ENCODE measurements at regions of chr2 and their contacts with region 1.

Region 1: GRCh38 chr2:10832203-10832936 is 19.8 kb upstream of the PDIA6 start:
- DNase-seq: peak; percentile 88
- H3K4me3 ChIP-seq: no peak overlapping the region
- H3K27ac ChIP-seq: no peak overlapping the region
- H3K4me1 ChIP-seq: peaks cover 0 to 31% (median 19%) of the 10 kb centered on the region in 4 donors
- H3K27me3 ChIP-seq: peaks cover 2 to 25% (median 6%) of the 10 kb centered on the region in 3 donors
- CTCF ChIP-seq: peak; percentile 74 to 94 (median 91)
- EP300 ChIP-seq: no peak
- POLR2A ChIP-seq: no peak

Region 2: DNA sequence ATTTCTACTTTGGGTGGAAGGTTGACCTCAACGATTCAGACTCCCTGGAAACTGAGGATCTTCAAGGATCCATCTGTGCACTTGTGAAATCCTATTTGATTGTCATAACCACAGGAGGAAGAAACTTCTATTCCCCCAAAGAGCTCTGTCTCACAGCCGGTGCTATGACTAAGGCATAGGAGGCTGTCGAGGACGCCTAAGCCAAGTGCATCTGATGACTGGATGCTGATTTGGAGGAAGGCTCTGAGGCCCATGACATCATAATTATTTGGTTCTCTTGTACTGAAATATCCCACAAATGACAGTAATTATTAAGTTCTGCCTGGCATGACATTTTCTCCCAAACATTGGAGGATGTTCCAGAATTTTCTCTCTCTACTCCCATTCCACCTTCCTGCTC is 65.6 kb after region 1 on chr2:
- intact Hi-C with region 1: loop called (anchors 5 kb)
- DNase-seq: no peak
- H3K4me3 ChIP-seq: no peak overlapping the region
- H3K27ac ChIP-seq: no peak overlapping the region
- H3K4me1 ChIP-seq: no peaks in the 10 kb centered on the region
- H3K27me3 ChIP-seq: no peaks in the 10 kb centered on the region
- CTCF ChIP-seq: no peak
- EP300 ChIP-seq: no peak
- POLR2A ChIP-seq: no peak

Region 3: DNA sequence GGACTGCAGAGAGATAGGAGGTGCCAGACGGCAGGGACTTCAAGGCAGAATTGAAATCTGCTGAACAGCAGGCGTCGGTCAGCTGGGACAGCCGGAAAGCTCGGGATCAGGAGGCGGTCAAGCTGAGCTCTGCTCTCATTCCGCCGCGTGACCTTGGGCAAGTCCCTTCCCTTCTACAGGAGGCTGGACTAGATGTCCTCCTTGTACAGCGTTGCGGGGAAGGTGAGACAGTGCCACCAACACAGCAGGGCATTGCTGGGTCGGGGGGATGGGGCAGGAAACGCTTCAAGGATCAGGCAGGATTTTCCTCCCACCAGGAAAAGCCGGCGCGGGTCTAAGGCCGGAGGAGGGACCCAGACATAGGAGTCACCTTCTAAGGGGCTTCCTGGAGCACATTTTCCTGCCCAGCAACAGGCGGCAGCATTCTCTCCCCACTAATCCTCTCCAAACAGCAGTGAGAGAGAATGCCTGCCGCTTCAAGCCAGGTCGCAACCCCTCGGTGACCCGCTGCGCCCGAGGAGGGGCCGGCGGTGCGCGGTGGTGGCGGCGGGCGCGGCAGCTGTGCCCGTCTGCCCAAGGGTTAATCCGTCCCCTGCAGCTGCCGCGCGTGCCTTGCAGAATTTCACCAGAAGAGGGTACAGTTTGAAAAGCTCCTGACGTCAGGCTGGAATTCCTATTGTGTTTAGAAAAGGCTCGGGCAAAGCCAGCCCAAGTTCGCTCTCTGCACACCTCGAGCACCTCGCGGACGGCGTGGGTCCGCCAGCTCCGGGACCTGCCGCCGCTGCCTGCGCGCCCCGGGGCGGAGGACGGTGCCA is 79.1 kb after region 1 on chr2 and contains the start of gene KCNF1:
- intact Hi-C with region 1: loop called (anchors 5 kb)
- DNase-seq: peak; percentile 59
- H3K4me3 ChIP-seq: peak within 1 kb of the TSS; percentile 21 to 48 (median 42)
- H3K27ac ChIP-seq: peak within 1 kb of the TSS in 1 of 4 donors; percentile 57
- H3K4me1 ChIP-seq: peaks cover 0 to 15% (median 6%) of the 10 kb centered on the region in 4 donors
- H3K27me3 ChIP-seq: peaks cover 4 to 29% (median 16%) of the 10 kb centered on the region in 3 donors
- CTCF ChIP-seq: no peak
- EP300 ChIP-seq: no peak
- POLR2A ChIP-seq: no peak
- total RNA-seq, gene KCNF1: 0.16 to 1.4 (median 0.94) TPM

Region 4: GRCh38 chr2:10963155-10963554 is 130.8 kb after region 1 on chr2:
- intact Hi-C with region 1: no loop called
- DNase-seq: no peak
- H3K4me3 ChIP-seq: no peak overlapping the region
- H3K27ac ChIP-seq: no peak overlapping the region
- H3K4me1 ChIP-seq: peaks cover 0 to 15% (median 0%) of the 10 kb centered on the region in 4 donors
- H3K27me3 ChIP-seq: no peaks in the 10 kb centered on the region
- CTCF ChIP-seq: no peak
- EP300 ChIP-seq: no peak
- POLR2A ChIP-seq: no peak

Region 5: DNA sequence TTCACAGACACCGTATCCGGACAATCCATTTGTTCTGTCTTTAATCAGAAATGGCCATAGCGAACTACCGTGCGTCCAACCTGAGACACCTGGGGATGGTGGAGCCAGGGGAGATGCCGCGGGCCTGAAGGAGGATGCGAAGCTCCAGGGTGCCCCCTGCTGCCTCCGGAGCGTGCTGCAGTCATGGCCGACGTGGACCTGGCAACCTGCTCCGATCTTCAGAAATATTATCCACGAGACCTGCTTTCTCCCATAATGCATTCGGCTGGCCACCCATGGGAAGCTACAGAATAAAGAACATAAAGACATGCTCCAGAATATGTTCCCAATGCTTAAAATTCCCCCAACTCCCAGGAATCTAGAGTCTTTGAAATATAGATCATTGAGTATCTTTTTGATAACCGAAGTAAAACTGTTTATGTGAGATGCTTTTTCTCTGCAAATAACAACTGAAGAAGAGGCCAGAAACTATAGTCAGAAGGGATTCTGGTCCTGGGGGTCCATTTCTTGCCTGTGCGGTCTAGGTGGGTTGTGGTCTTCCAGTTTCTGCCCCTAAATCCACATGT is 292.2 kb after region 1 on chr2:
- intact Hi-C with region 1: loop called (anchors 2 kb)
- DNase-seq: no peak
- H3K4me3 ChIP-seq: no peak overlapping the region
- H3K27ac ChIP-seq: no peak overlapping the region
- H3K4me1 ChIP-seq: peaks cover 0 to 2% (median under 1%) of the 10 kb centered on the region in 4 donors
- H3K27me3 ChIP-seq: no peaks in the 10 kb centered on the region
- CTCF ChIP-seq: peak; percentile 30 to 70 (median 62)
- EP300 ChIP-seq: no peak
- POLR2A ChIP-seq: no peak

Region 6: DNA sequence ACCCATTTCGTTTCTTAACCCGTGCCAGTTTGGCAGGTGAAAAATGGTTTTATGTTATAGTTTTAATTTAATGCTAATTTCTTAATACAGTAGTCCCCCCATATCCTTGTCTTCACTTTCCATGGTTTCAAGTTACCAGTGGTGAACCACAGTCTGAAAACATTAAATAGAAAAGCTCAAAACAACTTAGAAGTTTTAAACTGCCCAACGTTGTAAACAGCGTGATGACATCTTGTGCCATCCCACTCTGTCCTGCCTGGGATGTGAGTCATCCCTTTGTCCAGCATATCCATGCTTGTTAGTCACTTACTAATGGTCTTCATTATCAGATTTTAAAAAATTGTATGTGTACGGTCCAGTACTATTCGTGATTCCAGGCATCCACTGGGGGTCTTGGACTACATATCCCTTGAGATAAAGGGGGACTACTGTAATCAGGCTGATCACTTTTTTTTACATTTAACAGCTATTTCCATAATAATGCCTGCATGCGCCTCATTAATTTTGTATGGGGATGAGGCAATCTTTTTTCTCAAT is 354.8 kb after region 1 on chr2:
- intact Hi-C with region 1: no loop called
- DNase-seq: no peak
- H3K4me3 ChIP-seq: no peak overlapping the region
- H3K27ac ChIP-seq: no peak overlapping the region
- H3K4me1 ChIP-seq: no peaks in the 10 kb centered on the region
- H3K27me3 ChIP-seq: no peaks in the 10 kb centered on the region
- CTCF ChIP-seq: no peak
- EP300 ChIP-seq: no peak
- POLR2A ChIP-seq: no peak

Region 7: DNA sequence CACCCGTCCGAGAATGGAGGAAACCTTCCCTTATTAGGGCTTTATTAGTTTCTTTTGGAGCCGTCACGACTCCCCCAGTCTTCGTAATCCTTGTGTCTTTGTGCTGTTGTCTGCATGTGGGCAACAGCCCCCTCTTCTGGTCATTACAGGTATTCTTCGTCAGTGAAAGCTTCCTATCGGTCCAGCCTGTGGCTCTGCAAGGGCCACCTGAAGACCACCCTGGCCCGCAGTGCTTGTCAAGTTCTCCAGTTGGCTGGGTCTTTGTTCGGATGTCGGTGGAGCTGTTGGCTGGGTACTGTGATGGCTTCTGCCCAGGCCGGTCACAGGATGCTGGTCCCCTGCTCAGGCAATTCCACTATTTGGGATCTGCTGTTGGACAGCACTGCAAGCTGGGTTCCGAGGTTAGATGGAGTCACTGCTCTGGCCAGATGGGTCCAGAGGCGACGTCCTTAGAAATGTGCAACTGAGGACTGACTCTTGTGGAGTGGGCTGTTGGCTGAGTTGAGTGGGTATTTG is 614.4 kb after region 1 on chr2:
- intact Hi-C with region 1: loop called (anchors 10 kb)
- DNase-seq: peak; percentile 63
- H3K4me3 ChIP-seq: no peak overlapping the region
- H3K27ac ChIP-seq: peak overlapping the region in 1 of 4 donors; percentile 3
- H3K4me1 ChIP-seq: no peaks in the 10 kb centered on the region
- H3K27me3 ChIP-seq: no peaks in the 10 kb centered on the region
- CTCF ChIP-seq: peak; percentile 42 to 73 (median 68)
- EP300 ChIP-seq: no peak
- POLR2A ChIP-seq: no peak

Measured in sigmoid colon (tissue), 7 donors.